A673 (cell line): ENCODE measurements at regions of chr2 and their contacts with region 1.

Region 1: DNA sequence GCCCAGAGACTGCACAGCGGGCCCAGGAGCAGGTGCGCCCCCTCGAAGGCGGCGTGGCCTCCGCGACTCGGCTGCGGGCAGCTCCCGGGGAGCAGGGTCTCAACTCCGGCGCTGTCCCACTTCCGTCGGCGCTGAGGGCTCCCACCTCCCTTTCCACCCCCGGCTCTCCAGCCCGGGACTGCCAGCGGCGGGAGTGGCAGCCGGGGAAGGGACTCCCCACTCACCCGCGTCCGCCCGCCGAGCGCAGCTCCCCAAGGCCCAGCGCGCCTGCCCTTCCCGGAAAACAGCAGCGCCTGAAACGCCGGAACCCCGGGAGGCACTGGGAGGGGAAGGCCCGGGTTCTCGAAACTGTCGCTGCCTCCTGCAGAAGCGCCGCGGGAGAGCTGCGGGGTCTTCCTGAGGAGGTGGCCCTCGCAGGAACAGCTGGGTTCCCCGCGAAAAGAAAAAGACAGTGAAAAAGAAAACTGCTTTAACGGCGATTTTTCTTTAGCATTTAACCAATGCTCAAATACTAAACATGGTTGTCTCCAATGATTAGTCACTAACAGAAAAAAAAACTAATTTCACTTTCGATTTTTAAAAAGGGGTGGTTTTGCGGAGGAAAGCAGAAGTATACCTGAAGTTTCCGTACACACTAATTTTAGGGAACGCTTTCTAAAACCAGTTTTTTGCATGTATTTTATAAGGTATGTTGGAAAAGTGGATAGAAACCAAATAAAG is at the start of gene NMI:
- DNase-seq: peak; percentile 92
- H3K4me3 ChIP-seq: peak within 1 kb of the TSS; percentile 52
- H3K27ac ChIP-seq: peak within 1 kb of the TSS; percentile 95
- H3K4me1 ChIP-seq: peaks cover 39% of the 10 kb centered on the region
- H3K27me3 ChIP-seq: no peaks in the 10 kb centered on the region
- CTCF ChIP-seq: no peak
- total RNA-seq, gene NMI: 76.2 and 78.9 TPM in 2 replicates

Region 2: DNA sequence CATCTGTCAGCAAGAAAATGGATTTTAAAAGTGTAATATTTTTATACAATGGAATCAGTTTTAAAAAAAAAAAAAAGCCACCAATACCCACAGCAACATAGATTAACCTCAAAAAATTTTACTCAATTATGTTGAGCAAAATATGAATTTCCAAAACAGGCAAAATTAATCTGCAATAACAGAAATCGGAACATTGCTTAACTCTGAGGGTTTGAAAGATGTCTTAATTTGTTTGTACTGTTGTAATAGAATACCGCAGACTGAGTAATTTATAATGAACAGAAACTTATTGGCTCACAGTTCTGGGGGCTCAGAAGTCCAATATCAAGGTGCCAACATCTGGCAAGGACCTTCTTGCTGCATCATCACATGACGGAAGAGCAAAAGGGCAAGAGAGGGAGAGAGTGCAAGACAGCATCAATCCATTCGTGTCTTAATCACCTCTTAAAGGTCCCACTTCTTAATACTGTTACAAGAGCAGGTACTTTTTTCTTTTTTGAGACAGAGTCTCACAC is 36.1 kb after region 1 on chr2:
- CTCF ChIA-PET with region 1: no interaction called
- POLR2A ChIA-PET with region 1: no interaction called
- intact Hi-C with region 1: loop called (anchors 5 kb)
- DNase-seq: no peak
- H3K4me3 ChIP-seq: peak overlapping the region; percentile 54
- H3K27ac ChIP-seq: peak overlapping the region; percentile 92
- H3K4me1 ChIP-seq: peaks cover 35% of the 10 kb centered on the region
- H3K27me3 ChIP-seq: no peaks in the 10 kb centered on the region
- CTCF ChIP-seq: no peak